ENCODE measurements at regions of chr6 and their contacts with region 1.

Region 1: DNA sequence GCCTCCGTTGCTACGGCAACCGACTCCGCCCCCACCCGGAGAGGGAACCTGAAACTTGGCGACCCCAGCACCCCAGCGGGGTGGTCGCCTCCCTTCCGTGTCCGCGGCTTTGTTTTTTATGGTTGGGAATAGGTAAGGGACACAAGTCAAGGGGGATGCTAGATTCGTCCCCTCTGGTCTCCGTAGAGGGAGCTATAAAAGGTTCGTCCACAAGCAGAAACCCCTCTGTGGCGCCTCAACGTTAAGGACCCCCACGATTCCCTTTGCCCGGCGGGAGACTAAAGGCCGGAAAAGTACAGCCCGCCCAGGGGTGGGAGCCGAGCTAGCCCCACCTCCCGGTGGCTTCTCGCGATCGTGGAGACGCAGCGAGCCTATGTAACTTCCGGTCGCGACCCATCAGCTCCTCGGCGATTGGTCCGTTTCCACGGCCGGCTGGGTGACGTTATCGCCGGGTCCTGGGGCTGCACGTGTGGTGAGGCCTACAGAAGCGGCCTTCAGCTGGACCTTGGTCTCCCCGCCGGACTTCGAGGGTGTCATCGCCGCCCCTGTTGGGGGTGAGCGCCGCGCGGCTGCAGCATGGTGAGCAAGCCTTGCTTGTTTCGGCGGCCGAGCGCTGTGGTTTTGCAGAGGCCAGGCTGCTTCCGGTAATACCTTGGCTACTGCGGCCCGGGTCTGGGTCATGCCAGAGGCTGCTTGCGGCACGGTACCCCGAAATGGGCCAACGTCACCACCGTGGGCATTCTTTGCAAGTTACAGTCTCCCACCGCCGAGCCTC is at the start of gene LTV1:
- DNase-seq: peak; percentile 96
- H3K4me3 Mint-ChIP-seq: peak within 1 kb of the TSS; percentile 93
- H3K27ac Mint-ChIP-seq: peak within 1 kb of the TSS; percentile 94
- H3K4me1 Mint-ChIP-seq: peaks cover 28% of the 10 kb centered on the region
- H3K27me3 Mint-ChIP-seq: no peaks in the 10 kb centered on the region
- total RNA-seq, gene LTV1: 22.8 to 23.3 TPM

Region 2: GRCh38 chr6:143450453-143451371 is 392.4 kb before region 1 on chr6 and contains the starts of genes ADAT2 and PEX3:
- CTCF ChIA-PET with region 1: no interaction called
- intact Hi-C with region 1: loop called (anchors 1 kb)
- DNase-seq: peak; percentile 96
- H3K4me3 Mint-ChIP-seq: peak within 1 kb of the TSS; percentile 100
- H3K27ac Mint-ChIP-seq: peak within 1 kb of the TSS; percentile 97
- H3K4me1 Mint-ChIP-seq: peaks cover 50% of the 10 kb centered on the region
- H3K27me3 Mint-ChIP-seq: no peaks in the 10 kb centered on the region
- total RNA-seq, gene ADAT2: 36.8 to 39.5 TPM
- total RNA-seq, gene PEX3: 10.8 to 11.9 TPM

Region 3: GRCh38 chr6:143536865-143537691 is 306.0 kb before region 1 on chr6:
- CTCF ChIA-PET with region 1: no interaction called
- intact Hi-C with region 1: loop called (anchors 5 kb)
- DNase-seq: peak; percentile 71
- H3K4me3 Mint-ChIP-seq: peak overlapping the region; percentile 76
- H3K27ac Mint-ChIP-seq: peak overlapping the region; percentile 15
- H3K4me1 Mint-ChIP-seq: peaks cover 35% of the 10 kb centered on the region
- H3K27me3 Mint-ChIP-seq: no peaks in the 10 kb centered on the region

Region 4: GRCh38 chr6:143677891-143678791 is 164.9 kb before region 1 on chr6 and contains the start of gene PHACTR2:
- CTCF ChIA-PET with region 1: no interaction called
- intact Hi-C with region 1: loop called (anchors 1 kb)
- DNase-seq: peak; percentile 78
- H3K4me3 Mint-ChIP-seq: peak within 1 kb of the TSS; percentile 80
- H3K27ac Mint-ChIP-seq: peak within 1 kb of the TSS; percentile 36
- H3K4me1 Mint-ChIP-seq: peaks cover 12% of the 10 kb centered on the region
- H3K27me3 Mint-ChIP-seq: peaks cover 7% of the 10 kb centered on the region
- total RNA-seq, gene PHACTR2: 10.7 to 12.2 TPM

Region 5: DNA sequence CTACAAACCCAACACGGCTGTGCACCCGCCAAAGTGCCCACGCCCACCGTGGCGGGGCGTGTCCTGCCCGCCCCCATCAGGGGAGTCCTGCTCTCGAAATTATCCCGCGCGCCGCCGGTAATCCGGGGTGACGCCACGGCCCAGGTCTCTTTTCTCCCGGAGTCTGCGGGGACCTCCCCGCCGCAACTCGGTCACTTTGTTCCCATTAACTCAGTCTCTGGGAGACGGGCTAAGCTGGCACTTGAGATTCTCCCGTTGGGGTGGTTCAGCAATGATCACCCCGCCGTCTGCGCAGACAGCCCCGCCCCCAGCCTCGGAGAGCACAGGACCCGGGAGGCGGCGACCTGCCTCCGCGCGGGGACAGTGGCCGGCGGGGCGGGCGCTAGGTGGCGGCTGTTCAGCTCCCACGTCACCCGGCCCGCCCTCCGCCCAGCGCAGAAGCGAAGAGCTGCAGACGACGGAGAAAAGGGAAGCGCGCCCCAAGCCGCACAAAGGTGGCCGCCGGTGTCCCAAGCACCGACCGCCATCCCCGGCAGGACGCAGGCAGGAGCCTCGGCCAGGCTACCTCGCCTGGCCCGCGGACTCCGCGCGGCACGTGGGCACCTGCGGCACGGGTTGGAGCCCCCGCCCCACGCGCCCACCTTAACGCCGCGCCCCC is 220.8 kb after region 1 on chr6:
- CTCF ChIA-PET with region 1: no interaction called
- intact Hi-C with region 1: loop called (anchors 2 kb)
- DNase-seq: peak; percentile 86
- H3K4me3 Mint-ChIP-seq: peak overlapping the region; percentile 75
- H3K27ac Mint-ChIP-seq: peak overlapping the region; percentile 43
- H3K4me1 Mint-ChIP-seq: peaks cover 40% of the 10 kb centered on the region
- H3K27me3 Mint-ChIP-seq: no peaks in the 10 kb centered on the region

Measured in activated naive CD4-positive, alpha-beta T cell treated with anti-CD3 and anti-CD28 coated beads for 36 hours (primary cell).